Activated B cell treated with CpG ODN at 0.5 μM for 24 hours (primary cell): ENCODE measurements at regions of chr5 and their contacts with region 1.

Region 1: GRCh38 chr5:14208071-14209021 is 65.2 kb downstream of the TRIO start:
- DNase-seq: no peak
- ATAC-seq: peak; percentile 29
- H3K4me3 Mint-ChIP-seq: peak overlapping the region; percentile 62
- H3K27ac Mint-ChIP-seq: peak overlapping the region; percentile 90
- H3K4me1 Mint-ChIP-seq: peaks cover 88% of the 10 kb centered on the region
- H3K27me3 Mint-ChIP-seq: no peaks in the 10 kb centered on the region
- CTCF ChIP-seq: no peak

Region 2: GRCh38 chr5:14108170-14108996 is 100.0 kb before region 1 on chr5:
- CTCF ChIA-PET with region 1: interaction called, 18 read pairs
- POLR2A ChIA-PET with region 1: interaction called, 3 read pairs
- intact Hi-C with region 1: loop called (anchors 1 kb)
- DNase-seq: no peak
- ATAC-seq: peak; percentile 85
- H3K4me3 Mint-ChIP-seq: peak overlapping the region; percentile 76
- H3K27ac Mint-ChIP-seq: peak overlapping the region; percentile 80
- H3K4me1 Mint-ChIP-seq: peaks cover 40% of the 10 kb centered on the region
- H3K27me3 Mint-ChIP-seq: peaks cover 1% of the 10 kb centered on the region
- CTCF ChIP-seq: no peak

Region 3: DNA sequence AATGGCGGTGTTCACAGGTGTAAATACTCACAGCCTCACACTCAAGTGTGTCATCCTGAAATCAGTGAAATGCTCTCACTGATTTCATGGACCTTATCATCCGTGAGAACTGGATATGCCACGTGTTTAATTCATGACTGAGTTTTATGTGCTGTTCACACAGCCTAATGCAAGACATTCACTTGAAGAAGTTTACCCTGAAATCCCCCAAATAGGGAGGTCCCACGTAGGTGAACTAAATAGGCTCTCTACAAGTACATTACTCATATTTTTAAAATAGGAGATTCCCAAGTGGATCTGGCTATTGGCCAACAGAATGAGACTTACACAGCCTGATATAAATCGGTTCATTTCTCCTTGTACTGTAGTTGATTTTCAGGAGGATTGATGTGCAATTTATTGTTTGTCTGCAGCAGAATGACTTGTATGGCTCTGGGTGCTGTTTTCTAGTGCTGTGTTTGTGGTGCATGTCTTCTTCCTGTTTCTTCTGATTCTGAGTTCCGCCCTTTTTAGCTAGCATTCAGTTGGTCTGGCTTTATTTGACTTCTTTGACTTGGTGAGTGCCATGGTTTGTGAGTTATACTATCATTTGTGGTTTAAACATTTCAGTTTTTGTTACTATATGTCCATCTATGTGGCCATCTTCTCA is 40.1 kb before region 1 on chr5:
- CTCF ChIA-PET with region 1: interaction called, 4 read pairs
- POLR2A ChIA-PET with region 1: interaction called, 5 read pairs
- intact Hi-C with region 1: loop called (anchors 2 kb)
- DNase-seq: no peak
- ATAC-seq: peak; percentile 61
- H3K4me3 Mint-ChIP-seq: peak overlapping the region; percentile 71
- H3K27ac Mint-ChIP-seq: peak overlapping the region; percentile 85
- H3K4me1 Mint-ChIP-seq: peaks cover 88% of the 10 kb centered on the region
- H3K27me3 Mint-ChIP-seq: no peaks in the 10 kb centered on the region
- CTCF ChIP-seq: no peak

Region 4: DNA sequence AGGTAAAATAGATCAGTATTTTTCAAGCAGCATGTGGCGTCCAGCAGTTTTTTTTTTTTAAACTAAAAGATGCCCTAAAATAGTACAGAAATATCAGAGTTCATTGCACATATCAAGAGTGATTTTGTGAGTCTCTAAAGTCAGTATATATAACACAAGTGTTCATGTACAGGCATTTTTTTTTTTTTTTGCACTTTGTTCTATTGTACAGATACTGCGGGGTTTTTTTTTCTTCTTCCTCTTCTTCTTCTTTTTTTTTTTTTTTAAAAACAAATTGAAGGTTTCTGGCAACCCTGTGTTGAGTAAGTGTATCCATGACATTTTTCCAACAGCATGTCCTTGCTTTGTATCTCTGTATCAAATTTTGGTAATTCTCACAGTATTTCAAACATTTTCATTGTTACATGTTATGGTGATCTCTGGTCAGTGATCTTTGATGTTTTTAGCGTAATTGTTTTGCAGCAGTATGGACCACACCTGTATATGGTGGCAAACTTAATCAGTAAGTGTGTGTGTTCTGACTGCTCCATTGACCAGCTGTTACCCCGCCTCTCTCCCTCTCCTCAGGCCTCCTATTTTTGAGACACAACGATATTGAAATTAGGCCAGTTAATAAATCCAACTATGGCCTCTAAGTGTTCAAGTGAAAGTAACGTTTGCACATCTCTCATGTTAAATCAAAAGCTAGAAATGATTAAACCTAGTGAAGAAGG is 11.6 kb after region 1 on chr5:
- CTCF ChIA-PET with region 1: no interaction called
- POLR2A ChIA-PET with region 1: interaction called, 6 read pairs
- intact Hi-C with region 1: loop called (anchors 1 kb)
- DNase-seq: no peak
- ATAC-seq: no peak
- H3K4me3 Mint-ChIP-seq: peak overlapping the region; percentile 44
- H3K27ac Mint-ChIP-seq: peak overlapping the region; percentile 59
- H3K4me1 Mint-ChIP-seq: peaks cover 96% of the 10 kb centered on the region
- H3K27me3 Mint-ChIP-seq: no peaks in the 10 kb centered on the region
- CTCF ChIP-seq: no peak

Region 5: GRCh38 chr5:14234219-14234618 is 25.9 kb after region 1 on chr5:
- CTCF ChIA-PET with region 1: no interaction called
- POLR2A ChIA-PET with region 1: no interaction called
- intact Hi-C with region 1: no loop called
- DNase-seq: no peak
- ATAC-seq: no peak
- H3K4me3 Mint-ChIP-seq: no peak overlapping the region
- H3K27ac Mint-ChIP-seq: peak overlapping the region; percentile 32
- H3K4me1 Mint-ChIP-seq: peaks cover 63% of the 10 kb centered on the region
- H3K27me3 Mint-ChIP-seq: no peaks in the 10 kb centered on the region
- CTCF ChIP-seq: no peak

Region 6: GRCh38 chr5:14270209-14270702 is 61.9 kb after region 1 on chr5:
- CTCF ChIA-PET with region 1: interaction called, 10 read pairs
- POLR2A ChIA-PET with region 1: interaction called, 3 read pairs
- intact Hi-C with region 1: loop called (anchors 2 kb)
- DNase-seq: no peak
- ATAC-seq: peak; percentile 75
- H3K4me3 Mint-ChIP-seq: no peak overlapping the region
- H3K27ac Mint-ChIP-seq: no peak overlapping the region
- H3K4me1 Mint-ChIP-seq: peaks cover 53% of the 10 kb centered on the region
- H3K27me3 Mint-ChIP-seq: no peaks in the 10 kb centered on the region
- CTCF ChIP-seq: peak; percentile 67